ENCODE measurements at regions of chr6 and their contacts with region 1.

Region 1: GRCh38 chr6:4775584-4776494 is at the start of gene CDYL:
- DNase-seq: no peak
- ATAC-seq: peak; percentile 64
- H3K4me3 ChIP-seq: peak within 1 kb of the TSS; percentile 89
- H3K27ac ChIP-seq: peak within 1 kb of the TSS; percentile 60
- H3K4me1 ChIP-seq: peaks cover 25% of the 10 kb centered on the region
- H3K27me3 ChIP-seq: peaks cover 3% of the 10 kb centered on the region in 2 experiments; a peak in 2 of 4 replicates
- CTCF ChIP-seq: 0 out of 6 replicates have a peak, but pooled peaks of 1 of the 3 experiments have one; percentile 2
- EP300 ChIP-seq: no peak
- POLR2A ChIP-seq: no peak
- RAD21 ChIP-seq: no peak
- polyA plus RNA-seq, gene CDYL: 11.2 to 15.3 TPM

Region 2: GRCh38 chr6:4018172-4018905 is 757.5 kb before region 1 on chr6:
- CTCF ChIA-PET with region 1: no interaction called
- POLR2A ChIA-PET with region 1: no interaction called
- RAD21 ChIA-PET with region 1: no interaction called
- SMC1A ChIA-PET with region 1: interaction called, 4 read pairs
- in situ Hi-C with region 1: loop called (anchors 10 kb)
- intact Hi-C with region 1: loop called (anchors 10 kb)
- DNase-seq: peak; percentile 87
- ATAC-seq: peak; percentile 75
- H3K4me3 ChIP-seq: peak overlapping the region; percentile 67
- H3K27ac ChIP-seq: peak overlapping the region; percentile 91
- H3K4me1 ChIP-seq: peaks cover 4% of the 10 kb centered on the region; the same call in 1 of the 2 replicates
- H3K27me3 ChIP-seq: no peaks in the 10 kb centered on the region
- CTCF ChIP-seq: peak; percentile 13 to 29 (median 18); a peak in 1 of 6 replicates
- EP300 ChIP-seq: no peak; a peak in 1 of 4 replicates
- POLR2A ChIP-seq: peak; percentile 95
- RAD21 ChIP-seq: no peak

Region 3: GRCh38 chr6:4805553-4806336 is 29.9 kb after region 1 on chr6:
- CTCF ChIA-PET with region 1: interaction called, 10 read pairs
- POLR2A ChIA-PET with region 1: interaction called, 65 read pairs
- RAD21 ChIA-PET with region 1: interaction called, 203 read pairs
- SMC1A ChIA-PET with region 1: interaction called, 237 read pairs
- in situ Hi-C with region 1: no loop called
- intact Hi-C with region 1: loop called (anchors 2 kb)
- DNase-seq: no peak
- ATAC-seq: no peak
- H3K4me3 ChIP-seq: no peak overlapping the region
- H3K27ac ChIP-seq: no peak overlapping the region
- H3K4me1 ChIP-seq: peaks cover 46% of the 10 kb centered on the region
- H3K27me3 ChIP-seq: no peaks in the 10 kb centered on the region
- CTCF ChIP-seq: peak; percentile 48 to 70 (median 57); a peak in 5 of 6 replicates
- EP300 ChIP-seq: no peak
- POLR2A ChIP-seq: no peak
- RAD21 ChIP-seq: peak; percentile 48; the same call in 1 of the 2 replicates

Region 4: GRCh38 chr6:4901386-4902061 is 125.7 kb after region 1 on chr6:
- CTCF ChIA-PET with region 1: interaction called, 4 read pairs
- POLR2A ChIA-PET with region 1: no interaction called
- RAD21 ChIA-PET with region 1: interaction called, 14 read pairs
- SMC1A ChIA-PET with region 1: interaction called, 10 read pairs
- in situ Hi-C with region 1: no loop called
- intact Hi-C with region 1: loop called (anchors 2 kb)
- DNase-seq: peak; percentile 67
- ATAC-seq: peak; percentile 93
- H3K4me3 ChIP-seq: peak overlapping the region; percentile 18; the same call in 1 of the 2 replicates
- H3K27ac ChIP-seq: peak overlapping the region; percentile 76
- H3K4me1 ChIP-seq: peaks cover 37% of the 10 kb centered on the region
- H3K27me3 ChIP-seq: no peaks in the 10 kb centered on the region
- CTCF ChIP-seq: no peak
- EP300 ChIP-seq: peak; percentile 64 to 75; a peak in 3 of 4 replicates
- POLR2A ChIP-seq: no peak
- RAD21 ChIP-seq: no peak

Region 5: GRCh38 chr6:4936681-4937041 is 160.8 kb after region 1 on chr6:
- CTCF ChIA-PET with region 1: interaction called, 6 read pairs
- POLR2A ChIA-PET with region 1: no interaction called
- RAD21 ChIA-PET with region 1: interaction called, 4 read pairs
- SMC1A ChIA-PET with region 1: interaction called, 4 read pairs
- in situ Hi-C with region 1: no loop called
- intact Hi-C with region 1: loop called (anchors 2 kb)
- DNase-seq: no peak
- ATAC-seq: peak; percentile 67
- H3K4me3 ChIP-seq: no peak overlapping the region
- H3K27ac ChIP-seq: no peak overlapping the region
- H3K4me1 ChIP-seq: peaks cover 12% of the 10 kb centered on the region
- H3K27me3 ChIP-seq: no peaks in the 10 kb centered on the region
- CTCF ChIP-seq: peak; percentile 48 to 70 (median 70); a peak in 5 of 6 replicates
- EP300 ChIP-seq: no peak
- POLR2A ChIP-seq: no peak
- RAD21 ChIP-seq: peak; percentile 80

Measured in GM12878 (cell line).